GM12878 (cell line): ENCODE measurements at regions of chr12 and their contacts with region 1.

Region 1: GRCh38 chr12:121278169-121279080 is 18.1 kb downstream of the CAMKK2 start:
- DNase-seq: no peak
- ATAC-seq: no peak
- H3K4me3 ChIP-seq: no peak overlapping the region
- H3K27ac ChIP-seq: no peak overlapping the region
- H3K4me1 ChIP-seq: peaks cover 4% of the 10 kb centered on the region
- H3K27me3 ChIP-seq: no peaks in the 10 kb centered on the region
- CTCF ChIP-seq: no peak
- EP300 ChIP-seq: no peak
- POLR2A ChIP-seq: no peak
- RAD21 ChIP-seq: no peak

Region 2: DNA sequence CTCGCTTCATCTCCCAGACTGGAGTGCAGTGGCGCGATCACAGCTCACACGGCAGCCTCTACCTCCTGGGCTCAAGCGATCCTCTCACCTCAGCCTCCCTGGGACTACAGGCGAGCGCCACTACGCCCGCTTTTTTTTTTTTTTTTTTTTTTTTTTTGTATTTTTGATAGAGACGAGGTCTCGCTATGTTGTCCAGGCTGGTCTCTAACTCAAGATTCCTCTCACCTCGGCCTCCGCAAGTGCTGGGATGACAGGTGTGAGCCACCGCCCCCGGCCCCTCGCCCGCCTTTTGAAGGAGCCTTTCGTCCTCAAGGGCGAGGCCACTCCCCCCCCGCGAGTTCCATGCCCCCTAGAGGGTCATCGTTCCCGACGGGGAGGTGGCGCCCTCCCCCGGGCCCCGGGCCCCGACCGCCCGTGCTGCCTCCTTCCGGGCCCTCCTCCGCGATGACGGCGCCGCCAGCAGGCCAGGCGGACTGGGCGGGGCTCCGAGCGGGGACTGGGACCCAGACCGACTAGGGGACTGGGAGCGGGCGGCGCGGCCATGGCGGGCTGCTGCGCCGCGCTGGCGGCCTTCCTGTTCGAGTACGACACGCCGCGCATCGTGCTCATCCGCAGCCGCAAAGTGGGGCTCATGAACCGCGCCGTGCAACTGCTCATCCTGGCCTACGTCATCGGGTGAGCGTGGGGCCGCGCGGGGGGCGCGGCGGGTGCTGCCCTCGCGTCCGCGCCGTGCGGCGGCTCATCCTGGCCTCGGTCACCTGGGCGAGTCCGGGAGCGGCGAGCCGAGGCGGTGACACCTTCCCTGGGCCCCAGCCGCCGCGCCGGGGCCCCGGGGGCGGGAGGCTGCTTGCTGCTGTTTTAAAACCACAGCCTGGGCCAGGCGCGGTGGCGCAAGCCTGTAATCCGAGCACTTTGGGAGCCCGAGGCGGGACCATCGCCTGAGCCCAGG is 68.5 kb before region 1 on chr12 and contains the start of gene P2RX4:
- CTCF ChIA-PET with region 1: no interaction called
- POLR2A ChIA-PET with region 1: interaction called, 3 read pairs
- RAD21 ChIA-PET with region 1: no interaction called
- SMC1A ChIA-PET with region 1: no interaction called
- in situ Hi-C with region 1: no loop called
- intact Hi-C with region 1: loop called (anchors 1 kb)
- DNase-seq: peak; percentile 44
- ATAC-seq: peak; percentile 92
- H3K4me3 ChIP-seq: peak within 1 kb of the TSS; percentile 71
- H3K27ac ChIP-seq: peak within 1 kb of the TSS; percentile 64
- H3K4me1 ChIP-seq: peaks cover 9% of the 10 kb centered on the region
- H3K27me3 ChIP-seq: no peaks in the 10 kb centered on the region
- CTCF ChIP-seq: peak; percentile 24 to 54 (median 50); a peak in 5 of 6 replicates
- EP300 ChIP-seq: no peak
- POLR2A ChIP-seq: peak; percentile 99
- RAD21 ChIP-seq: peak; percentile 58
- polyA plus RNA-seq, gene P2RX4: 9.0 to 11.3 TPM

Region 3: DNA sequence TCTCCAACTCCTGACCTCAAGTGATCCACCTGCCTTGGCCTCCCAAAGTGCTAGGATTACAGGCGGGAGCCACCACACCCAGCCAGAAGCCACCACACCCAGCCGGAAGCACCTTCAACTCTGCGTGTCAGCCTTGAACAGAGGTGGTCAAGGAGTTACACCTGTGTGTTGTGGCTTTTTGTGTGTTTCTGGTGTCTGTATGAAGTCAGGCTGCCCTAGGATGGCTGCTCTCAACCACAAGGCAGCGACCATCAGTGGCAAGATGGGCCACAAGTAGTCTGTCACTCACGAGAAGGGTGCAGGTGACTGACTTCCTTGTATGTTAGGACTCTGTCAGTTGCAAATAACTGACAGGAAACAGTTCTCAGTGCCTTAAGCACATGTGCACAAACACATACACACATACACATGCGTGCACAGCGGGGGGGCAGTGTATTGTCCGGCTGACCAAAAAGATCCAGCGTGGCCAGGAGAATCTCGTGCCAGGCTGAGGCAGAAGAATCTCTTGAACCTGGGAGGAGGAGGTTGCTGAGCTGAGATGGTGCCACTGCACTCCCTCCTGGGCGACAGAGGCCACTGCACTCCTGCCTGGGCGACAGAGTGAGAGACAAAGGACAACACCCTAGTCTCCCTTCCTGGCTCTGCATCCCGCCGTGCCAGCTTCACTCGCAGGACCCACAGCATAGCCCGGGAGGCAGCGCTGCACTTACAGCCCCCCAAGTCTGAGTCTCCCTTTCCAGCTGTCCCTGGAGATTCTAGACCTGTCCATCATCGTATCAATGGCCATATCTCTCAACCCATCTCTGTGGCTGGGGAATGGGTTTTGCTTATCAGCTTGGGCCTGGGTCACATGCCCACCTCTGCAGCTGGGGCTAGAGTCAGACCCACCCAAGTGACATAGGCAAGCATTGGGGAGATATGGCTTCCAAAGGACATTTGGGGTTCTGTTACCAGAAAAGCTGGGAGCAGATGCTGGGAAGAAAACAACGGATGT is 54.8 kb before region 1 on chr12:
- CTCF ChIA-PET with region 1: no interaction called
- POLR2A ChIA-PET with region 1: no interaction called
- RAD21 ChIA-PET with region 1: no interaction called
- SMC1A ChIA-PET with region 1: no interaction called
- in situ Hi-C with region 1: no loop called
- intact Hi-C with region 1: no loop called
- DNase-seq: no peak
- ATAC-seq: peak; percentile 66
- H3K4me3 ChIP-seq: no peak overlapping the region
- H3K27ac ChIP-seq: no peak overlapping the region
- H3K4me1 ChIP-seq: peaks cover 16% of the 10 kb centered on the region
- H3K27me3 ChIP-seq: no peaks in the 10 kb centered on the region
- CTCF ChIP-seq: peak; percentile 40 to 64 (median 41); a peak in 5 of 6 replicates
- EP300 ChIP-seq: no peak
- POLR2A ChIP-seq: no peak
- RAD21 ChIP-seq: peak; percentile 40; the same call in 1 of the 2 replicates

Region 4: GRCh38 chr12:121296618-121297434 is 18.4 kb after region 1 on chr12 and contains the start of gene CAMKK2:
- CTCF ChIA-PET with region 1: interaction called, 4 read pairs
- POLR2A ChIA-PET with region 1: interaction called, 4 read pairs
- RAD21 ChIA-PET with region 1: interaction called, 10 read pairs
- SMC1A ChIA-PET with region 1: interaction called, 3 read pairs
- in situ Hi-C with region 1: no loop called
- intact Hi-C with region 1: no loop called
- DNase-seq: no peak
- ATAC-seq: peak; percentile 80
- H3K4me3 ChIP-seq: peak within 1 kb of the TSS; percentile 99
- H3K27ac ChIP-seq: peak within 1 kb of the TSS; percentile 74
- H3K4me1 ChIP-seq: peaks cover 19% of the 10 kb centered on the region
- H3K27me3 ChIP-seq: no peaks in the 10 kb centered on the region
- CTCF ChIP-seq: peak in 2 of 3 experiments; percentile 20 to 23; a peak in 1 of 6 replicates
- EP300 ChIP-seq: no peak
- POLR2A ChIP-seq: peak; percentile 71
- RAD21 ChIP-seq: no peak
- polyA plus RNA-seq, gene CAMKK2: 5.2 to 5.3 TPM

Region 5: GRCh38 chr12:121352682-121353018 is 74.2 kb after region 1 on chr12:
- CTCF ChIA-PET with region 1: no interaction called
- POLR2A ChIA-PET with region 1: no interaction called
- RAD21 ChIA-PET with region 1: no interaction called
- SMC1A ChIA-PET with region 1: no interaction called
- in situ Hi-C with region 1: no loop called
- intact Hi-C with region 1: no loop called
- DNase-seq: no peak
- ATAC-seq: peak; percentile 62
- H3K4me3 ChIP-seq: peak overlapping the region; percentile 68
- H3K27ac ChIP-seq: peak overlapping the region; percentile 77
- H3K4me1 ChIP-seq: no peaks in the 10 kb centered on the region; the same call in 1 of the 2 replicates
- H3K27me3 ChIP-seq: no peaks in the 10 kb centered on the region
- CTCF ChIP-seq: no peak
- EP300 ChIP-seq: no peak
- POLR2A ChIP-seq: no peak
- RAD21 ChIP-seq: no peak